Heart right ventricle (tissue), 16 donors: ENCODE measurements at regions of chr1 and their contacts with region 1.

Region 1: GRCh38 chr1:110087812-110088738 is 17.6 kb upstream of the ALX3 start:
- DNase-seq: peak in 1 of 2 donors; percentile 65
- ATAC-seq: peak; percentile 45 to 77 (median 72)
- H3K4me3 ChIP-seq: no peak overlapping the region
- H3K27ac ChIP-seq: no peak overlapping the region
- H3K4me1 ChIP-seq: peaks cover 11 to 32% (median 18%) of the 10 kb centered on the region in 9 donors
- H3K27me3 ChIP-seq: peaks cover 0 to 50% (median 31%) of the 10 kb centered on the region in 7 donors
- CTCF ChIP-seq: peak; percentile 39 to 78 (median 71)

Region 2: GRCh38 chr1:110068646-110069403 is 19.2 kb before region 1 on chr1:
- intact Hi-C with region 1: no loop called
- DNase-seq: no peak
- ATAC-seq: peak in 1 of 8 donors; percentile 4
- H3K4me3 ChIP-seq: peak overlapping the region in 5 of 10 donors; percentile 5 to 29 (median 14)
- H3K27ac ChIP-seq: no peak overlapping the region
- H3K4me1 ChIP-seq: peaks cover 0 to 33% (median 27%) of the 10 kb centered on the region in 9 donors
- H3K27me3 ChIP-seq: peaks cover 35 to 83% (median 73%) of the 10 kb centered on the region in 7 donors
- CTCF ChIP-seq: no peak

Region 3: GRCh38 chr1:110106013-110106941 is 18.2 kb after region 1 on chr1:
- intact Hi-C with region 1: loop called in 2 of 10 experiments (anchors 1 kb)
- DNase-seq: peak; percentile 52 to 69
- ATAC-seq: peak; percentile 50 to 86 (median 84)
- H3K4me3 ChIP-seq: no peak overlapping the region
- H3K27ac ChIP-seq: no peak overlapping the region
- H3K4me1 ChIP-seq: peaks cover 0 to 18% (median 8%) of the 10 kb centered on the region in 9 donors
- H3K27me3 ChIP-seq: peaks cover 0 to 15% (median 0%) of the 10 kb centered on the region in 7 donors
- CTCF ChIP-seq: peak; percentile 84 to 97 (median 94)

Region 4: DNA sequence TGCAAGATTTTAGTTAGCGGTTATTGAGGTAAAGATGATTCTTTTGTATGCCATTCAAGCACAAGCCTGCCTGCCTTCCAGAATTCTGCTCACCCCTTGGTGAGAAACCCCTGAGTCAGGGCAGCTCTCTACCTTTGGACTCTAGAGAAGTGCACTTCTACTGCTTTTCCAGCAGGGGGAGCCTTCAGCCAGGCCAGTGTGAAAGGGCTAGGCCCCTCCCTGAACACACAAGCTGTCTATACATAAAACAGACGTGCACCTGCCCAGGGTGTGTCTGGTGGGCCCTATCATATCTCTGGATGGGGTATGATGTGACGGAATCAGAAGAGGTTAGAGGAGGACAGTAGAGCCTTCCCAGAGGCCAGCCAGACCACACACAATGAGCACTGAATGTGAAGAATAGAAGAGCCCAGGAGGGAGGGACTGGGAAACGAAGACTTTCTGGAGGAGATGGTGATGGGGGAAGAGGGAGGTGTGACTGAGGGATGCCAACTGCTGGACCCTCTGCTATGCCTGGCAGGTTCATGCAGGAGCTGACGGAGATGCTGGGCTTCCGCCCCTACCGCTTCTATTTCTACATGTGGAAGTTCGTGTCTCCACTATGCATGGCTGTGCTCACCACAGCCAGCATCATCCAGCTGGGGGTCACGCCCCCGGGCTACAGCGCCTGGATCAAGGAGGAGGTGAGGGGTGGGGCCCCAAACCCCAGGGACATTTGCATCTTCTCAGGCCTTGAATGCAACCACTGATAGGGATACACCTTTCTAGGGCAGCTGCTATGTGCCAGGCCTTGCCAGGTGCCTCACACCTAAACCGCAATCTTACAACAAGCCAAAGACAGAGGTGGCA is 109.1 kb after region 1 on chr1:
- intact Hi-C with region 1: no loop called
- DNase-seq: no peak
- ATAC-seq: peak; percentile 38 to 76 (median 62)
- H3K4me3 ChIP-seq: no peak overlapping the region
- H3K27ac ChIP-seq: no peak overlapping the region
- H3K4me1 ChIP-seq: no peaks in the 10 kb centered on the region
- H3K27me3 ChIP-seq: no peaks in the 10 kb centered on the region
- CTCF ChIP-seq: peak; percentile 70 to 94 (median 89)

Region 5: DNA sequence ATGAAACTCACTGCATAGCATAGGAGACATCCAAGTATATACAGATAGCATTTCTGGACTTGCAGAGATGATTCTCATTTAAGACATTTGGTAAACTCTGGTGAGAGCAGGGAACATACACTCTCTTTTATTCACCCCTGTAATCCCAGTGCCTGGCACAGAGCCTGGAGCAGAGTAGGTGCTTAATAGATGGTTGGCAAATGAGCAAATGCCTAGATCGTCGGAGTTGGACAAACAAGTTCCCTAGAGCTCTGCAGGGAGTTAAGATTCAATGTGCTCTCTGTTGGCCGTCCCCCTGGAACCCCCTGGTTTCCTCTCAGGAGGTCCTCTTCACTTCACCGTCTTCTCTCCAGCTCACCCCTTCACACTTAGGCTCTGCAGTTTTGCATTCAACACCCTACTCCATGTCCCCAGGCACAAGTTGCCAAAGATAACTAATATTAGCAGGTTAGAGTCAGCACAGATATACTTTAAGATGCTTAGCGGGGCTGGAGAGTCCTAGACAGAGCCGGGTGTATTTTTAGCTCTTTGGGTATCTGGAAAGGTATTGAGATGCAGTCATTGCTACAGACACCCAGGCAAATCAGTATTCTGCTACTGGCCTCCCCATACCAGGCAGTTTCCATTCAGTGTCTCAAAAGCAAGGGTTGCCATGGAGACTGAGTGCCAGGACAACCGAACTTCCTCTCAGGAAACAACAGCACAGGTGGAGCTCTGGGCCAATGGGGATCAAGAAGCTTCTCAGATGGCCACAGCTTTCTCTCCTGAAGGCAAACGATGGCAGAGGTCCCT is 167.1 kb after region 1 on chr1:
- intact Hi-C with region 1: no loop called
- DNase-seq: no peak
- ATAC-seq: peak; percentile 42 to 94 (median 72)
- H3K4me3 ChIP-seq: no peak overlapping the region
- H3K27ac ChIP-seq: peak overlapping the region in 3 of 10 donors; percentile 39 to 60 (median 39)
- H3K4me1 ChIP-seq: peaks cover 0 to 28% (median 17%) of the 10 kb centered on the region in 9 donors
- H3K27me3 ChIP-seq: no peaks in the 10 kb centered on the region
- CTCF ChIP-seq: no peak